Heart left ventricle (tissue), 16 donors: ENCODE measurements at regions of chr19 and their contacts with region 1.

Region 1: DNA sequence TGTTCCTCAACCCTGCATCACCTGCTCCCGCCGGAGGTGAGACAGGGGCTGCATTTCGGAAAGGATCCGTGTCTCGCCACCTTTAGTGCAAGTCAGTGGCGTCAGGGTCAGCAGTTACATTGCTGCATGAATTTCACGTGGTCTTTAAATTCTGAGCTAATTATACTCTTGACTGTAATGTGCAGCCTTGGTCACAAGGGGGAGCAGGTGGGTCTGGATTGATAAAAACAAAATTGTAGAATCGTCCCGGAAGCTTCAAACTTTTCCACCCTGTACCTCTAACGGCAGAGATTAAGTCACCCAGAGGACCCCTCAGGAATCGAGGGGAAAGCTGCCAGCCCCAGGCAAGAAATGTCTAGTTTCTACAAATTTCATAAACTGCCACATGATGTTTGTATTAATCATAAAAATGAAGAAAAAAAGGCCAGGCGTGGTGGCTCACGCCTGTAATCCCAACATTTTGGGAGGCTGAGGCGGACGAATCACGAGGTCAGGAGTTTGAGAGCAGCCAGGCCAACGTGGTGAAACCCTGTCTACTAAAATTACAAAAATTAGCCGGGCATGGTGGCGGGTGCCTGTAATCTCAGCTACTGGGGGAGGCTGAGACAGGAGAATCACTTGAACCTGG is 20.2 kb downstream of the BBC3 start:
- DNase-seq: peak; percentile 65 to 81 (median 75)
- ATAC-seq: peak; percentile 30 to 72 (median 64)
- H3K4me3 ChIP-seq: no peak overlapping the region
- H3K27ac ChIP-seq: peak overlapping the region in 11 of 12 donors; percentile 24 to 72 (median 53)
- H3K4me1 ChIP-seq: peaks cover 0 to 24% (median 10%) of the 10 kb centered on the region in 12 donors
- H3K27me3 ChIP-seq: no peaks in the 10 kb centered on the region
- CTCF ChIP-seq: peak; percentile 68 to 91 (median 82)
- POLR2A ChIP-seq: no peak

Region 2: DNA sequence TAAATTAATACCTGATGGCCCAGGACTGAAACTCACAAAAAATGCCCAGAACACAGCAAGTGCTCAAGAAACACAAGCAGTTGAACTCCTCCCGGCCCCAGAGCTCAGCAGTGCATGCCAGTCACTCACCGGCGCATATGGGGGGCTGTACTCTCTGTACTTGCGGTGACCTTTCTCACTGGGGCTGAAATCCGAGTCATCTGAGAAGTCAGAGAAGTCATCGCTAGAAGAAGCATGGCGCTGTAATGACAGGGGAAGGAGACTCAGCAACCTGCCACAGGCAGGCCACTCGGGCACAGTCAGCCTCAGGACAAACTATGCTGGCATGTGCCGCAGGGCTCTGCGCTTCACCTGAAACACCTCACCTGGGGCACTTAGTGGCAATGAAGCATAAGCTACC is 117.0 kb before region 1 on chr19:
- intact Hi-C with region 1: no loop called
- DNase-seq: peak in 1 of 5 donors; percentile 22
- ATAC-seq: no peak
- H3K4me3 ChIP-seq: no peak overlapping the region
- H3K27ac ChIP-seq: peak overlapping the region in 1 of 12 donors; percentile 79
- H3K4me1 ChIP-seq: peaks cover 0 to 50% (median 41%) of the 10 kb centered on the region in 12 donors
- H3K27me3 ChIP-seq: no peaks in the 10 kb centered on the region
- CTCF ChIP-seq: no peak
- POLR2A ChIP-seq: no peak

Region 3: DNA sequence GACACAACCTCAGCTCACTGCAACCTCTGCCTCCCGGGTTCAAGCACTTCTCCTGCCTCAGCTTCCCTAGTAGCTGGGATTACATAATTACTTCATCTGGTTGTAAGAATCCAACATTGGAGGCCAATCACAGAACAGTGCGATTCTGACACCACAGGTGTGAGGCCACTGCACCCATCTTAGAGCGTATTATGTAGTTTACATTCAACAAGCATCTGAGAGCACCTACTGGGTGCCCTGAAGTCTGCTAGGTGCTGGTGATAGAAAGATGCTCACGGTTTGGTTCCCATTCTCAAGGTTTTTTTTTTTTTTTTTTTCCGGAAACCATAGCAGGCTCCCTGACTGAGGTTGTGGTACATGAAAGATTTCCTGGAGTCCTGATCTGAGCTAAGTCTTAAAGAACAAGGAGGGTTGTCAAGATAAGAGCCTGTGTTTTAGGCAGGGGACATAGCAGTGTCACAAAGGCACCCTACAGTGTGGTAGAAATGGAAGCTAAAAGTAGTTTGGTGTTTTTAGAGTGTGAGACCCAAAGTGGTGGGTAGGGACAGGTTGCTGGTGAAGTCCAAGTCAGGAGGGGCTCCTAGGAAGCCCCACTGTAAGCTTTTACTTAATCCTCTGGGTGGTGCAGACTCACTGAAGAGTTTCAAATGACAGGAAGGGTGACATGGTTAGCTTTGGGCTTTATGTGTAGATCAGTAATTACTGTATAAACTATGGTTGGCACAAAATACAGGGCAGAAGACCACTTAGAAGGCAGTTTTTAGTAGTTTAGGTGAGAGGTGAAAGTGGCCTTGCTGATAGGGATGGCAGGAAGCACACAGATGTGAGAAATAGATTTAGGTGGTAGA is 64.9 kb before region 1 on chr19:
- intact Hi-C with region 1: loop called in 5 of 10 experiments (anchors 5 to 10 kb)
- DNase-seq: no peak
- ATAC-seq: no peak
- H3K4me3 ChIP-seq: no peak overlapping the region
- H3K27ac ChIP-seq: peak overlapping the region in 2 of 12 donors; percentile 23 to 73
- H3K4me1 ChIP-seq: peaks cover 0 to 11% (median 3%) of the 10 kb centered on the region in 12 donors
- H3K27me3 ChIP-seq: no peaks in the 10 kb centered on the region
- CTCF ChIP-seq: no peak
- POLR2A ChIP-seq: no peak

Region 4: GRCh38 chr19:47152224-47153017 is 58.4 kb before region 1 on chr19:
- intact Hi-C with region 1: loop called in 9 of 10 experiments (anchors 5 to 10 kb)
- DNase-seq: no peak
- ATAC-seq: peak in 1 of 4 donors; percentile 16
- H3K4me3 ChIP-seq: no peak overlapping the region
- H3K27ac ChIP-seq: peak overlapping the region in 2 of 12 donors; percentile 11 to 45
- H3K4me1 ChIP-seq: peaks cover 6 to 28% (median 18%) of the 10 kb centered on the region in 12 donors
- H3K27me3 ChIP-seq: no peaks in the 10 kb centered on the region
- CTCF ChIP-seq: no peak
- POLR2A ChIP-seq: no peak

Region 5: GRCh38 chr19:47225746-47226425 is 15.1 kb after region 1 on chr19:
- intact Hi-C with region 1: loop called in 1 of 10 experiments (anchors 2 kb)
- DNase-seq: peak; percentile 89 to 94 (median 92)
- ATAC-seq: peak; percentile 19 to 78 (median 68)
- H3K4me3 ChIP-seq: peak overlapping the region; percentile 38 to 99 (median 88)
- H3K27ac ChIP-seq: peak overlapping the region; percentile 97 to 100 (median 100)
- H3K4me1 ChIP-seq: peaks cover 0 to 53% (median 31%) of the 10 kb centered on the region in 12 donors
- H3K27me3 ChIP-seq: no peaks in the 10 kb centered on the region
- CTCF ChIP-seq: peak in 9 of 12 donors; percentile 33 to 68 (median 54)
- POLR2A ChIP-seq: peak; percentile 99 to 100